ENCODE measurements at regions of chr1 and their contacts with region 1.

Region 1: GRCh38 chr1:201907621-201908020 is 18.9 kb downstream of the SHISA4 start:
- DNase-seq: no peak
- ATAC-seq: no peak
- H3K4me3 ChIP-seq: no peak overlapping the region
- H3K4me3 Mint-ChIP-seq: no peak overlapping the region
- H3K27ac ChIP-seq: no peak overlapping the region
- H3K27ac Mint-ChIP-seq: no peak overlapping the region
- H3K4me1 ChIP-seq: no peaks in the 10 kb centered on the region
- H3K4me1 Mint-ChIP-seq: no peaks in the 10 kb centered on the region
- H3K27me3 ChIP-seq: peaks cover 0 to 20% of the 10 kb centered on the region in 2 experiments
- H3K27me3 Mint-ChIP-seq: peaks cover 0 to 8% of the 10 kb centered on the region in 2 donors

Region 2: GRCh38 chr1:202105539-202106276 is 198.1 kb after region 1 on chr1:
- CTCF ChIA-PET with region 1: interaction called in 1 of 2 experiments, 10 read pairs
- POLR2A ChIA-PET with region 1: no interaction called
- DNase-seq: no peak
- ATAC-seq: no peak
- H3K4me3 ChIP-seq: no peak overlapping the region
- H3K4me3 Mint-ChIP-seq: no peak overlapping the region
- H3K27ac ChIP-seq: no peak overlapping the region
- H3K27ac Mint-ChIP-seq: no peak overlapping the region
- H3K4me1 ChIP-seq: no peaks in the 10 kb centered on the region
- H3K4me1 Mint-ChIP-seq: no peaks in the 10 kb centered on the region
- H3K27me3 ChIP-seq: peaks cover 0 to 7% of the 10 kb centered on the region in 2 experiments
- H3K27me3 Mint-ChIP-seq: peaks cover 0 to 3% of the 10 kb centered on the region in 2 donors

Measured in T-cell (primary cell).